HCT116 (cell line): ENCODE measurements at regions of chr2 and their contacts with region 1.

Region 1: DNA sequence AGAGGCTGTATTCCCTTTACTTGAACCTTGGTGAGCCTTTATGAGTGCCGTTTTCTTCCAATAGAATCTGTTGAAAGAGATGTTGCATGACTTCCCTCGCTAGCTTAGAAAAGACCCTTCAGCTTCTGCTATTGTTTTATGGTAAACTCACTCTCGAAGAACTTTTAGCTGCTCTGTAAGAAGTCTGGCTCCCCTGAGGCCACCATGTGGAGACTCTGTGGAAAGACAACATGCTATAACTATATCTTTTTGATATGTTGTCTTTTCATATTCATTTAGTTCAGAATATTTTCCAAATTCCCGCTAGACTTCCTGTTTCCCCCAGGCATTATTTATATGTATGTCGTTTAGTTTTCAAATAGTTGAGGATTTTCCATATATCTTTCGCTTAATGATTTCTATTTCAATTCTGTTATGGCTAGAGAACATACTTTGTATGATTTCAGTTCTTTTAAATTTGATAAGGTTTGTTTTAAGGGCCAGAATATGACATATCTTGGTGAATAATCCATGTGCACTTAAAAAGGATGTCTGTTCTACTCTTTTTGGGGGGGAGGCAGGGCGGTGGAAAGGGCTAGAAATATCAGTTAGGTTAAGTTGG is 64.1 kb downstream of the PTPN4 start:
- DNase-seq: no peak
- ATAC-seq: peak; percentile 63
- H3K4me3 ChIP-seq: no peak overlapping the region
- H3K27ac ChIP-seq: no peak overlapping the region
- H3K4me1 ChIP-seq: no peaks in the 10 kb centered on the region
- H3K27me3 ChIP-seq: no peaks in the 10 kb centered on the region
- CTCF ChIP-seq: peak; percentile 59 to 69 (median 67); a peak in 5 of 6 replicates
- POLR2A ChIP-seq: no peak
- RAD21 ChIP-seq: peak; percentile 63

Region 2: GRCh38 chr2:119702918-119703401 is 120.9 kb before region 1 on chr2:
- CTCF ChIA-PET with region 1: interaction called, 10 read pairs
- POLR2A ChIA-PET with region 1: no interaction called
- RAD21 ChIA-PET with region 1: no interaction called
- intact Hi-C with region 1: loop called (anchors 1 kb)
- DNase-seq: peak; percentile 58
- ATAC-seq: peak; percentile 99
- H3K4me3 ChIP-seq: no peak overlapping the region
- H3K27ac ChIP-seq: no peak overlapping the region
- H3K4me1 ChIP-seq: peaks cover 0 to 5% of the 10 kb centered on the region in 2 experiments; a peak in 1 of 4 replicates
- H3K27me3 ChIP-seq: no peaks in the 10 kb centered on the region
- CTCF ChIP-seq: peak; percentile 93 to 98 (median 97)
- POLR2A ChIP-seq: no peak
- RAD21 ChIP-seq: peak; percentile 92

Region 3: DNA sequence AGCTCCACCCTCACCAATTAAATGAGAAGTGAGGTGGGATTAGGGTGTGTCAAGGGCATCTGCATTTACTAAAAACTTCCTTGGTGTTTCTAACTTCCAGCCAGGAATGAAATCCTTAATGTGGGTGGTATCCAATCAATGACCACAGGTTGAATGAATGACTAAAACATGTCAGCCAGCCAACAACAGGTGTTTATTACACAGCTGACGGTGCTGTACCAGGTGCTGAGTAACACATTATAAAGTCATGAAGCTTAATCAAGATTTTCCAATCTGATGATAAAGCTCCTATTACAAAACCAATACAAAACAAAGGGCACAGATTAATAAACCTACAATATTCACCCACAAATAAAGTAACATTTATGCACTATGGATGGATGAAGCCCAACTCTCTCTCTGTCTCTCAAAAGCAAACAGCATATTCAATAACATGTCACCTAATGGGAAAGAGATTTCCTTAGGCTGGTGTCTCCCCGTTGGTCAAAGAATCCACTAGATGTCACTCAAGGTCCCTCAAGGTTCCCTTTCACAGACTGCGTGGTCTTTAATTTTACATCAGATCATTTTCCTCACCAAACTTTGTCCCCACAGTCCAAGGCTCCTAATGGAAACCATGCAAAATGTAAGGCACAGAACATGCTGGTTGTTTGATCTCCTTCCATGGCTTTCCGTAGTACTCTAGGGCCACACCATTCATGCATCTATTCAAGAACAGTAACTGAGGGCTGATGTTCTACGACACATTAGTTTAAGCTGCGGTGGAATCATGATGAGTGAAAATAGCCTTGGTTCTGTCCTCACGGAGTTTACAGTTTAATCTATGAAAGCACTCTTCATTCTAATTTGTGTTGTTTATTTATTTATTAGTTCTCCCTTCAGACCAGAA is 70.5 kb before region 1 on chr2:
- CTCF ChIA-PET with region 1: interaction called, 22 read pairs
- POLR2A ChIA-PET with region 1: no interaction called
- RAD21 ChIA-PET with region 1: interaction called in 1 of 2 experiments, 3 read pairs
- intact Hi-C with region 1: loop called (anchors 1 kb)
- DNase-seq: peak; percentile 41
- ATAC-seq: peak; percentile 86
- H3K4me3 ChIP-seq: no peak overlapping the region
- H3K27ac ChIP-seq: no peak overlapping the region
- H3K4me1 ChIP-seq: peaks cover 8 to 37% of the 10 kb centered on the region in 2 experiments; a peak in 3 of 4 replicates
- H3K27me3 ChIP-seq: no peaks in the 10 kb centered on the region
- CTCF ChIP-seq: peak; percentile 68 to 73 (median 71)
- POLR2A ChIP-seq: no peak
- RAD21 ChIP-seq: peak; percentile 84